ENCODE measurements at regions of chr9 and their contacts with region 1.

Region 1: GRCh38 chr9:129460323-129461261 is 160.3 kb downstream of the C9orf50 start:
- DNase-seq: peak; percentile 94
- ATAC-seq: peak; percentile 82
- H3K4me3 Mint-ChIP-seq: peak overlapping the region; percentile 68
- H3K27ac Mint-ChIP-seq: peak overlapping the region; percentile 88
- H3K4me1 Mint-ChIP-seq: peaks cover 40% of the 10 kb centered on the region
- H3K27me3 Mint-ChIP-seq: peaks cover 14% of the 10 kb centered on the region

Region 2: GRCh38 chr9:129023036-129023907 is 437.3 kb before region 1 on chr9:
- CTCF ChIA-PET with region 1: no interaction called
- POLR2A ChIA-PET with region 1: no interaction called
- DNase-seq: no peak
- ATAC-seq: no peak
- H3K4me3 Mint-ChIP-seq: no peak overlapping the region
- H3K27ac Mint-ChIP-seq: no peak overlapping the region
- H3K4me1 Mint-ChIP-seq: peaks cover 38% of the 10 kb centered on the region
- H3K27me3 Mint-ChIP-seq: no peaks in the 10 kb centered on the region

Region 3: DNA sequence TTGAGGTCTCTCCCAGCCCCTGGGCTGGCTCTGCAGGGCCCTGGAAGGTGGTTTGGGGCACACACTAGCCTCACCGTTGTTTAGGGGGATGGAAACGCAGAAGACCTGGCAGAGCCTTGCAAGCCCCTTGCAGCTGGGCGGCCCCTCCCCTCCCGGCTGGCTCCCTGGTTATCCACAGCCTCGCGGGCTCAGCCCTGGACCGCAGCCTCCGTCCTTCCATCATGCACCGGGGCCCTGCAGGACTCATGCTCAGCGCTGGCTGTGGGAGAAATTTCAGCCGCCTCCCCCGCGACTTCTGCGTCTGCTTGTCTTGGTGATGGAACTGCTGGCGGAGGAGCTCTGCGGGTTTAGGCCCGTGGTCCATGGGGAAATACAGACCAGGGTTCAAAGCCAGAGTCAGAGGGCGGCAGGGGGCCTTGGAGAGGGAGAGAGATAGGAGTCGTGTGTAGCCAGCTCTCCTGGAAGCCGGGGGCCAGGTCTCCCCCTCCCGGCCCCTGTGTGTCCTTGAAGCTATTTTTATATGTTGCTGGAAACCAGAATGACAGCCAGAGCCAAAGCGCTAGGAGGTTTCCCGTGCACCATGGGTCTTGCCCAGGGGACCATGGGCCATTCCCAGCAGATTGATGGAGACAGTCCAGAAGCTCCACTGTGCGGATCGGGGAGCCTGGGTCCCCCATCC is 206.7 kb before region 1 on chr9:
- CTCF ChIA-PET with region 1: no interaction called
- POLR2A ChIA-PET with region 1: no interaction called
- DNase-seq: no peak
- ATAC-seq: no peak
- H3K4me3 Mint-ChIP-seq: no peak overlapping the region
- H3K27ac Mint-ChIP-seq: no peak overlapping the region
- H3K4me1 Mint-ChIP-seq: peaks cover 14% of the 10 kb centered on the region
- H3K27me3 Mint-ChIP-seq: peaks cover 28% of the 10 kb centered on the region

Region 4: DNA sequence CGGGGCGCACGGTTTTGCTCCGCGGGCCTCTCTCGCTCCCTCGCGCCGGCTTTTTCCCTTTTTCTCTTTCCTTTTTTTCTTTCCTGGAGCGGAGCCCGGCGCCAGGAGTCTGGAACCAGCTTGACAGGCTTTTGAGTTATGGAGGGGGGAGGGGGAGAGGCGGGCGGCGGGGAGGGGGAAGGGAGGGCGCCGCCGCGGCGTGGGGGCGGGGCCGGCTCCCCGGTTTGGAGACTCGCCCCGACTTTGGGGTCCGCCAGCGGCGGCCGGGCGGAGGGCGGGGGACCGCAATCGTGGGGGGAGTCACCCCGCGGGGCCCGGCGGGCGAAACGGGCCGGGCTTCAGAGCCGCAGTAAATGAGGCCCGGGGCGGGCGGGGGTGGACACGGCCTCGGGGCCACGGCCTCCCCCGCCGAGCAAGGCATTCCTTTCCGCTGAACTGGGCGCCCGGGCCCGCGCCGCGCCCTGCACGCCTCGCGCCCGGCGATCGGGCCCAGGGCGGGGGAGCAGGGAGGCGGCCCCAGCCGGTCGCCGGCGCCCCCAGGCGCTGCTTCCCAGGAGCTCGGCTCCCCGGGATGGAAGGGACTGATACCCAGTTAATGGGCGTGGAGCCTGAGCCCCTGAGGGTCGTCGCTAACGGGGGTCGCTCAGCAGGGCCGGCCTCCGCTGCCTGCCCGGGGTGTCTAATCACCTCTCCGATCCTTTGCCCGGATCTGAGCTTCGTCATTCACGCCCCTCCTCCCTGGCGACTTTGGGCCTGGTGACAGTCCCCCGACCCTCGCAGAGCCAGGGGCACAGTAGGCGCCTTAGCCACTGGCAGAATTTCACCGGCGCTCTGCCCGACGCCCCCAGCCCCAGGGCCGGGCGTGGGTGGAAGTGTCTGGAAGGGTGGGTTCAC is 22.2 kb after region 1 on chr9:
- CTCF ChIA-PET with region 1: interaction called, 3 read pairs
- POLR2A ChIA-PET with region 1: interaction called, 13 read pairs
- DNase-seq: no peak
- ATAC-seq: peak; percentile 30
- H3K4me3 Mint-ChIP-seq: peak overlapping the region; percentile 62
- H3K27ac Mint-ChIP-seq: no peak overlapping the region
- H3K4me1 Mint-ChIP-seq: peaks cover 41% of the 10 kb centered on the region
- H3K27me3 Mint-ChIP-seq: peaks cover 22% of the 10 kb centered on the region

Region 5: DNA sequence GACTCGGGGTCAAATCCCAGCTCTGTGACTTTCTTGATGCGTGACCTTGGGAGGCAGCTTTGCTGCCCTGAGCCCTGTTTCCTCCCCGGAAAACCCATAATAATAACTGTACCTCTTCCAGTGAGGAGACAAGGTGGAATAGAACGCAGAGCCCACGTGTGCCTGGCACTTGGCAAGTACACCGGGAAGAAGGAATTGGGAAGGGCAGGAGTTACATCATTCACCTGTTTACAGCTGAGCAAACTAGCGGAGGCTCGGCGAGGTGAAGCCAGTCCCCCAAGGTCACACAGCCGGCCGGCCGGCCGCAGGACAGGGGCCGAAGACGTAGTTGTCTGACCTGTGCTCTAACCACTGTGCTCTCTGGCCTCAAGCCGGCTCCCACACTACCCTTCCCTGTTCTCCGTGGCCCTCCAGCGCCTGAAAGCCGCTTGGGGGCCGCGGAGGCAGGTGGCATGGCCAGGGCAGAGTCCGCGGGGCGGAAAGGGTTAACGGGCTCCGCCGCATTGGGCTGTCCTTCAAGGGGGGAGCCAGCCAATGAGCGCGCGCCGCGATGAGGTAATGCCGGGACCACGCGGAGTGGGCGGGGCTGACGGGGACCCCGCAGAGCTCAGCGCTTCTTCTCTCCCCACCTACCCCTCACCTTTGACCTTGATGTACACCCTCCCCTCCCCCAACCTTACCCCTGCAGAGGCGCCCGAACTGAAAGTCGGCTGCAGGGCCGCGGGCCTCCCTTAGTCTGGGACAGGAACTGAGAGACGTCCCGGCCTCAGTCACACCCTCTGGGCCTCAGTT is 35.1 kb after region 1 on chr9:
- CTCF ChIA-PET with region 1: no interaction called
- POLR2A ChIA-PET with region 1: interaction called, 10 read pairs
- DNase-seq: peak; percentile 87
- ATAC-seq: peak; percentile 82
- H3K4me3 Mint-ChIP-seq: peak overlapping the region; percentile 73
- H3K27ac Mint-ChIP-seq: peak overlapping the region; percentile 53
- H3K4me1 Mint-ChIP-seq: peaks cover 40% of the 10 kb centered on the region
- H3K27me3 Mint-ChIP-seq: no peaks in the 10 kb centered on the region

Measured in activated CD8-positive, alpha-beta T cell treated with anti-CD3 and anti-CD28 coated beads, Interleukin-2, amount 10 ng/mL, durations not matched to agents 7 days and 5 days (primary cell).